CD8-positive, alpha-beta T cell (primary cell): ENCODE measurements at regions of chr19 and their contacts with region 1.

Region 1: DNA sequence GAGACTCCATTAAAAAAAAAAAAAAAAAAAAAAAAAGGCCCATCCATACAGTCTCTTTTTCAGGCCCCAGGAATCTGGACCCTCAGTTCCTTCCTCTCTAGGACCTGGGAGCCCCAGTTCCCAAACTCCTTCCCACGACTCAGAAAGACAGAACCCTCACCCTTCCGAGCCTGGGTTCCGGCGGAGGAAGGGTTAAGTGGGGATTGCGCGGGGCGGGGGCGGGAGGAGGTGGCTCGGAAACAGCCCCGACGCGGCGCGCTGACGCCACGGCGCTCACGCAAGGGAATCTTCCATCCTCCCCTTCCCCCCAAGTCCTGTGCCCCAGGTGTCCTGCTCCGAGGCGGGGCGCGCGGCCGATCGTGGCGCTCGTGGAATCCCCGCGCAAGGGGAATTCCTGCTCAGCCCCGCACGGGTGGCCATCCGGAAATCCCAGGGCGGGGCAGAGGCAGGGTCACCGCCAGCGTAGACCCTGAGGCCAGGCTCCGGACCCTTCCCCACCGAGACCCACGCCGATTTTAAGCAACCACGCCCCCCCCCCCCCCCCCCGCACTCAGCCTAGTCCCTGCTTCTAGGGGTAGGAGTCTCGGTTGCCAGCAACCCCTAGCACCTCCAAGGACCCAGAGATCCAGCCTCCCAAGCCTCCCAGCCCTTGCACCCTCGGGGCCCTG is 659 bp downstream of the NFKBID start:
- DNase-seq: peak; percentile 68 to 97 (median 87)
- ATAC-seq: peak; percentile 59
- H3K4me3 ChIP-seq: peak overlapping the region; percentile 95 to 97
- H3K4me3 Mint-ChIP-seq: peak overlapping the region; percentile 100
- H3K27ac ChIP-seq: peak overlapping the region; percentile 85 to 99
- H3K27ac Mint-ChIP-seq: peak overlapping the region; percentile 95
- H3K4me1 ChIP-seq: peaks cover 45% of the 10 kb centered on the region
- H3K4me1 Mint-ChIP-seq: peaks cover 57% of the 10 kb centered on the region
- H3K27me3 ChIP-seq: no peaks in the 10 kb centered on the region
- H3K27me3 Mint-ChIP-seq: no peaks in the 10 kb centered on the region
- CTCF ChIP-seq: no peak

Region 2: GRCh38 chr19:35740423-35741202 is 159.1 kb before region 1 on chr19:
- CTCF ChIA-PET with region 1: no interaction called
- POLR2A ChIA-PET with region 1: no interaction called
- intact Hi-C with region 1: loop called (anchors 1 kb)
- DNase-seq: peak; percentile 87 to 97 (median 95)
- ATAC-seq: peak; percentile 65
- H3K4me3 ChIP-seq: peak overlapping the region; percentile 60 to 63
- H3K4me3 Mint-ChIP-seq: peak overlapping the region; percentile 87
- H3K27ac ChIP-seq: peak overlapping the region; percentile 50 to 58
- H3K27ac Mint-ChIP-seq: peak overlapping the region; percentile 83
- H3K4me1 ChIP-seq: peaks cover 51% of the 10 kb centered on the region
- H3K4me1 Mint-ChIP-seq: peaks cover 53% of the 10 kb centered on the region
- H3K27me3 ChIP-seq: no peaks in the 10 kb centered on the region
- H3K27me3 Mint-ChIP-seq: no peaks in the 10 kb centered on the region
- CTCF ChIP-seq: no peak

Region 3: DNA sequence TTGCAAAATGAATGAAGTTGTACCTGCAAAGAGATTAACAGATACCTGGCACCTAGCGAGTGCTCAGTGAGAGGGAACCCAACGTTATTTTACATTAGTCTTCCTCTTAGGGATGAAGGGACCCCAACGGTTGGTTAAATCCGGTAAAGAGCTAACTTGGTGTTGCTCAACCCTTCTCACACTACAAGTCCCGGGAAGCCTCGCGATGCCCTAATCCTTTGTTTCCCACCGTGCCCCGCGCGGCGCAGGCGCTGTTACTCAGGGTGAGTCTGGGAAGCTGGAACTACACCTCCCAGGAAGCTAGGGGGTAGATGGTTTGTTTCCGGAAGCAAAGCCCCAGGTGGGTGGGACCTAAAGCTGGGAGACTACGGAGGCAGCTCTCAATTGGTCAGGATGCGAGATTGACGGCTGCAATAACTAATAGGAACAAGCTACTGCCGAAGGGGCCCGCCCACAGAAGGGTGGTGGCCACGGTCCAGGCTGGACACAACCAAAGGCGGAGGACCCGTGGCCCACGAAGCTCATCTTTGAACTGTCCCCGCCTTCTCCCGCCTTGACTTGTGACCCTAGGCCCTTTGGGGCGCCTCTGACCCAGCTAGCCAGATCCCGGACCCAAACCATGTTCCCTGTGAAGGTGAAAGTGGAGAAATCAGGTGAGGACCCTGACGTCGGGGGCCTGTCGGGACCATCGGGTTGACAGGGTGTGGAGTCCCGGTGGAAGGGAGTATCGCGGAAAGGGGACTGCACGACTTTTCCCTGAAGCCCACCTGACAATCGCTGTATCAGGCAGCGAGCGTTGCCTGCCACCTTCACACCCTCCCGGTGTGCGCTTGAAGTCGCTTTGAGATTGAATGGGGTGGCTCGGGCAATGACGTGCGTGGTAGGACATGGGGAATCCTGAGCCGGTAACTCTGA is 151.3 kb before region 1 on chr19 and contains the start of gene LIN37:
- CTCF ChIA-PET with region 1: no interaction called
- POLR2A ChIA-PET with region 1: no interaction called
- intact Hi-C with region 1: loop called in 1 of 2 experiments (anchors 1 kb)
- DNase-seq: peak; percentile 97 to 100 (median 98)
- ATAC-seq: peak; percentile 72
- H3K4me3 ChIP-seq: peak within 1 kb of the TSS; percentile 84 to 99
- H3K4me3 Mint-ChIP-seq: peak within 1 kb of the TSS; percentile 98
- H3K27ac ChIP-seq: peak within 1 kb of the TSS; percentile 71 to 84
- H3K27ac Mint-ChIP-seq: peak within 1 kb of the TSS; percentile 95
- H3K4me1 ChIP-seq: peaks cover 41% of the 10 kb centered on the region
- H3K4me1 Mint-ChIP-seq: peaks cover 44% of the 10 kb centered on the region
- H3K27me3 ChIP-seq: no peaks in the 10 kb centered on the region
- H3K27me3 Mint-ChIP-seq: no peaks in the 10 kb centered on the region
- CTCF ChIP-seq: no peak
- total RNA-seq, gene LIN37: 5.5 to 9.3 TPM

Region 4: DNA sequence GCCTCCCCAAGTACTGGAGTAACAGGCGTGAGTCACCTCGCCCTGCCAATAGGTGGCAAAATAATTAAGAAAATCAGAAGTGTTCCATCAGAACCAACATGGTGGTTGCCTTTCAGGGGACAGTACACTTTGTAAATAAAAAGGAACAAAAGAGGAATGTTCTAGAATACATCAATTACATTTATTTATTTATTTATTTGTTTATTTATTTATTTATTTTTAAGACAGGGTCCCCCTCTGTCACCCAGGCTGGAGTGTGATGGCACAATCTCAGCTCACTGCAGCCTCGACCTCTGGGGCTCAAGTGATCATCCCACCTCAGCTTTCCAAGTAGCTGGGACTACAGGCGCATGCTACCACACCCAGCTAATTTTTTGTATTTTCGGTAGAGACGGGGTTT is 21.3 kb after region 1 on chr19:
- CTCF ChIA-PET with region 1: no interaction called
- POLR2A ChIA-PET with region 1: no interaction called
- intact Hi-C with region 1: no loop called
- DNase-seq: no peak
- ATAC-seq: no peak
- H3K4me3 ChIP-seq: no peak overlapping the region
- H3K4me3 Mint-ChIP-seq: no peak overlapping the region
- H3K27ac ChIP-seq: no peak overlapping the region
- H3K27ac Mint-ChIP-seq: no peak overlapping the region
- H3K4me1 ChIP-seq: no peaks in the 10 kb centered on the region
- H3K4me1 Mint-ChIP-seq: no peaks in the 10 kb centered on the region
- H3K27me3 ChIP-seq: no peaks in the 10 kb centered on the region
- H3K27me3 Mint-ChIP-seq: no peaks in the 10 kb centered on the region
- CTCF ChIP-seq: no peak